OCI-LY7 (cell line): ENCODE measurements at regions of chr6 and their contacts with region 1.

Region 1: DNA sequence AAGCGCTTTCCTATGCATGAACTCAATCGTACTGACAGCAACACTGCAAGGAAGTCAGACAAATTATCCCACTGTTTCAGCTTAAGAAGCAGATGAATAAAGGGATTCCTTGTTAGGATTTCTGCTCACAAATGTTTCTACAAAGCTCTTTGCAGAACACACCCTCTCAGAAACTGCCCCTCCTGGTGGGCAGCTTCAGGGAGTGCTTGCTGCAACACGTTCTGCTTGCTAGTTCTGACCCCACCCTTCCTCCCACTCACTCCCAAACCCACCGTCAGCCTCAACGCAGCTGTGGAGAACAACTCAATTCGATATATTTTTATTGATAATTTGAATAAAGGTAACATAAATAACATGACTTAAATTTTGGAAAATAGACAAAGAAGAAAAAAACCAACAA is 250.8 kb upstream of the PRDM1 start:
- DNase-seq: peak; percentile 75
- H3K4me3 ChIP-seq: no peak overlapping the region
- H3K27ac ChIP-seq: peak overlapping the region; percentile 58
- H3K4me1 ChIP-seq: peaks cover 65% of the 10 kb centered on the region
- CTCF ChIP-seq: peak; percentile 81

Region 2: GRCh38 chr6:105733565-105734162 is 101.7 kb before region 1 on chr6:
- CTCF ChIA-PET with region 1: no interaction called
- POLR2A ChIA-PET with region 1: interaction called, 3 read pairs
- intact Hi-C with region 1: loop called (anchors 2 kb)
- DNase-seq: peak; percentile 73
- H3K4me3 ChIP-seq: no peak overlapping the region
- H3K27ac ChIP-seq: no peak overlapping the region
- H3K4me1 ChIP-seq: peaks cover 3% of the 10 kb centered on the region
- CTCF ChIP-seq: peak; percentile 99

Region 3: DNA sequence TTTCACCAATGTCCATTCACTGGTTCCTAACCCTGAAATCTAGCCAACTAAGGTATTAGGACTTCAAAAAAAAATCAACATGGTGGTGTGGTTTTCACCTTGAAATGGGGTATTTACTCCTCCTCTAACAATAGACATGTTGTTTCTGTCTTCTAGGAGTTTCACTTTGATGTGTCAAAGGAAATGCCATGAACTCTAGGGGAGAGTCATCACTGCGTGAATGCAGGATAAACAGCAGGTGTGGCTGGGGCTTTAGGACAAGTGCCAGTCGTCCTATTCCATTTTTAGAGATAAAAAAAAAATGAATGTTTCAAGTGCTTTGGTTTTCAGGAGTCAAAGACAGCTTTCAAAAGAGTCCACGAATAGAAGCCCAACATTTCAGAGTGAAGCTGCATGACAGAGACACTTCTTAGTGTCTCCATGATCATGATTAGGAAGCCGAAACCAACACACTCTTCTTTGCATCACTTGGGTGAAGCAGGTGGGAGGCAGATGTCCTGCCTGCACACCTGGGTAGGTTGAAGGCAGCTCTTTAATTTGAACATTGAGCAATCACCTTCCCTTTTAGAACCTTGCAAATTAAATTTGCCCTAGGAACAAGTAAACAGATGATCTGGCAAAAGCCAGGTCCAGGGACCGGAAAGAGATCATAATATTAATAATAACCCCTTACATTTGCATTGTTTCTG is 77.7 kb before region 1 on chr6:
- CTCF ChIA-PET with region 1: no interaction called
- POLR2A ChIA-PET with region 1: no interaction called
- intact Hi-C with region 1: loop called (anchors 2 kb)
- DNase-seq: peak; percentile 90
- H3K4me3 ChIP-seq: peak overlapping the region; percentile 47
- H3K27ac ChIP-seq: peak overlapping the region; percentile 84
- H3K4me1 ChIP-seq: peaks cover 50% of the 10 kb centered on the region
- CTCF ChIP-seq: no peak

Region 4: DNA sequence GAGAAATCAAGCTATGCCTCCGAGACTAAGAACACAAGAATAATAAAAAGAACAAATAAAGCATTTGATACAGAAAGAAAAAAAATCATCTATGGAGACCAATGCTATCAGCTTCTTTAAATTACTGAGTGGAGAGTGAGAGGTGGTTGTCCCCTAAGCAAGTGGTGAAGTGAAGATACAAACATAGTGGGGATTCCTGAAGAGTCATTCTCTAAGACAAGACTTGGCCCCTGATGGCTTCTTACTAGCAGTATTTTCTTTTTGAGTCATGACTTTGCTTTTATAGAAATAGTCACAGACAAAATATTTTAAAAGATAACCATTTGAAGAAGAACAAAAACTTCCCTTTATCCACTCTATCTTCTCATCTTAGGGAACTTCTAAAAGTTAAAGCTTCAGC is 10.6 kb before region 1 on chr6:
- CTCF ChIA-PET with region 1: no interaction called
- POLR2A ChIA-PET with region 1: interaction called, 10 read pairs
- intact Hi-C with region 1: no loop called
- DNase-seq: no peak
- H3K4me3 ChIP-seq: no peak overlapping the region
- H3K27ac ChIP-seq: no peak overlapping the region
- H3K4me1 ChIP-seq: peaks cover 23% of the 10 kb centered on the region
- CTCF ChIP-seq: no peak

Region 5: GRCh38 chr6:105898286-105898685 is 62.9 kb after region 1 on chr6:
- CTCF ChIA-PET with region 1: no interaction called
- POLR2A ChIA-PET with region 1: interaction called, 6 read pairs
- intact Hi-C with region 1: loop called (anchors 5 kb)
- DNase-seq: peak; percentile 41
- H3K4me3 ChIP-seq: no peak overlapping the region
- H3K27ac ChIP-seq: peak overlapping the region; percentile 21
- H3K4me1 ChIP-seq: peaks cover 98% of the 10 kb centered on the region
- CTCF ChIP-seq: no peak

Region 6: GRCh38 chr6:106046116-106046853 is 210.9 kb after region 1 on chr6:
- CTCF ChIA-PET with region 1: no interaction called
- POLR2A ChIA-PET with region 1: no interaction called
- intact Hi-C with region 1: no loop called
- DNase-seq: no peak
- H3K4me3 ChIP-seq: no peak overlapping the region
- H3K27ac ChIP-seq: no peak overlapping the region
- H3K4me1 ChIP-seq: no peaks in the 10 kb centered on the region
- CTCF ChIP-seq: no peak